OCI-LY7 (cell line): ENCODE measurements at regions of chr19 and their contacts with region 1.

Region 1: DNA sequence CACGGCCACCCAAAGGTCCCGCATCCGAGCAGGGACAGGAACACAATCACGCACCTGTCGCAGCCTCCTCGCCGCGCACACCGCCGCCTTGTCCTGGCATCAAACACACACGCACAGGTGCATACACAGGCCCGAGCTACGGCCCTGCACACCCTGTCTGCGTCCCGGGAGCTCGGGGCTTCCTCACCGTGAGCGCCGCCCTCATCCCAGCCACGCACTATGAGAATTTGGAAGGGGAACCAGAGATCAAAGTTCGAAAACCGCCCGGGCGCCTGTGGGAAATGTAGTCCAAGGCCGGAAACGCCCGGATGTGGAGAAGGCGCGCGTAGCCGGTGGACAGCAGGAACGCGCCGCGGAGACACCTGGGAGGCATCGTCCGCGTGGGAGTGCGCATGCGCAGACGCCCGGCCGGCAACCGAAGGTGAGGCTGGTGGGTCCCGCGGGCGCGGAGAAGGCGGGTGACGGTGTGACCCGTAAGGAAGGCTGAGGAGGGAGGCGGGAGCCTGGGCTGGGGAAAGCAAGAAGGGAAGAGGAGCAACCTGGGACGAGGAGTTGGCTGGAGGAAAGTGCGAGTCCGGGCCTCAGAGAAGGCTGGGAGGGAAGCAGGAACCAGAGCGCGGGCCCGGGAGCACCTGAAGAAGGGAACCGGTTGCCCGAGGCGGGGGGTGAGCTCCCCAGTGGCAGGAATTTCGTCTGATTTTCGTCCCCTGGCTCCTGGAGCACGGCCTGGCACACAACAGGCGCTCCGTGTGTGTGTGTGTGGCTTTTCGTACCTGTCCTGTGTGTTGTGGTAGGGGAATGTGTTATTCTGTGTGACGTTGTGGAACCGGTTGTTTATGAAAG is at the start of gene ZNF567:
- DNase-seq: peak; percentile 98
- H3K4me3 ChIP-seq: peak within 1 kb of the TSS; percentile 80
- H3K27ac ChIP-seq: peak within 1 kb of the TSS; percentile 32
- H3K4me1 ChIP-seq: peaks cover 12% of the 10 kb centered on the region
- CTCF ChIP-seq: no peak
- total RNA-seq, gene ZNF567: 8.3 and 8.4 TPM in 2 replicates

Region 2: DNA sequence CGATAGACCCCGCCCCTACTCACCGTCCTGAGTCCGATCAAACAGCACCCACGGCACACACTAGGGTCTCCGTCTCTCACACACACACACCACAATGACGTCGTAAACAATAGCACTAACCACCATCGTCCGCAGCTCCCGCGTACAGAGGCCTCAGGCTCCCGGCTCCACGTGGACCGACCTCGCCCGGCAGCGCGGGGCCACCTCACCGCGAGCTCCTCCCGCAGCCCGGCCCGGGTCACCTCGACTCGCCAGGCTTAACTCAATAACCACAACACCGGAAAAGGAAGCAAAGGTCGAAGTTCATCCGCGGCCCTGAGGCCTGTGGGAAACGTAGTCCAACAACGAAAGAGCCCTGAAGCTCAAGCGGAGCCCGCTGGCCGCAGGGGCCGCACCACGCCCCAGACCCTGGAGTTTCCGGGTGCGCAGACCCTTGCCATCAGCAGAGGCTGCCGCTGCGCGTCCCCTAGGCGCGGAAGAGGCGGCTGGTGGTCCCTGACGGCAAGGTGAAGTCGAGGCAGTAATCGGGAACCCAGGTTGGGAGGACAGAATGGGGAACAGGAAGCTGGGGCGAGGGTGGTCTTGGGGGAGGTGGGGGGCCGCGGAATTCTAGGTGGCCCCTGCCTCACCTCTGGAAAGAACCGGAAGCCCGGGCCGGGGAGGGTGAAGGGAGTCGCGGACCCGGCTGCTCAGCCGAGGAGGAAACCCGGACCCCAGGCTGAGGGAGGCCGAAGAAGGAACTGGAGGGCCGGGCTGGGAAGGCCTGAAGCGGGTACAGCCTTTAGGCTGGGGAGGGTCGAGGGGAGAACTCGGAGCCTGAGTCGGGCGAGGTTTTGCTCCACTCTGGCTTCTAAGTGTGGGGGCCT is 114.2 kb before region 1 on chr19 and contains the start of gene ZNF529:
- CTCF ChIA-PET with region 1: no interaction called
- POLR2A ChIA-PET with region 1: no interaction called
- intact Hi-C with region 1: loop called (anchors 5 kb)
- DNase-seq: peak; percentile 94
- H3K4me3 ChIP-seq: peak within 1 kb of the TSS; percentile 91
- H3K27ac ChIP-seq: peak within 1 kb of the TSS; percentile 35
- H3K4me1 ChIP-seq: peaks cover 19% of the 10 kb centered on the region
- CTCF ChIP-seq: 0 out of 2 replicates have a peak, but pooled peaks have one; percentile 14
- total RNA-seq, gene ZNF529: 9.0 and 11.6 TPM in 2 replicates

Region 3: GRCh38 chr19:36772311-36773222 is 85.1 kb after region 1 on chr19 and contains the start of gene ZNF850:
- CTCF ChIA-PET with region 1: no interaction called
- POLR2A ChIA-PET with region 1: no interaction called
- intact Hi-C with region 1: loop called (anchors 2 kb)
- DNase-seq: peak; percentile 98
- H3K4me3 ChIP-seq: peak within 1 kb of the TSS; percentile 73
- H3K27ac ChIP-seq: peak within 1 kb of the TSS; percentile 47
- H3K4me1 ChIP-seq: peaks cover 10% of the 10 kb centered on the region
- CTCF ChIP-seq: no peak
- total RNA-seq, gene ZNF850: 3.1 and 10.6 TPM in 2 replicates